WTC11 (cell line): ENCODE measurements at regions of chr10 and their contacts with region 1.

Region 1: GRCh38 chr10:103845972-103846371 is 9.4 kb downstream of the SH3PXD2A start:
- DNase-seq: no peak
- ATAC-seq: no peak; the same call in 1 of the 2 replicates
- H3K4me3 Mint-ChIP-seq: no peak overlapping the region
- H3K27ac Mint-ChIP-seq: no peak overlapping the region
- H3K4me1 Mint-ChIP-seq: peaks cover 46% of the 10 kb centered on the region
- H3K27me3 Mint-ChIP-seq: no peaks in the 10 kb centered on the region
- CTCF ChIP-seq: no peak

Region 2: DNA sequence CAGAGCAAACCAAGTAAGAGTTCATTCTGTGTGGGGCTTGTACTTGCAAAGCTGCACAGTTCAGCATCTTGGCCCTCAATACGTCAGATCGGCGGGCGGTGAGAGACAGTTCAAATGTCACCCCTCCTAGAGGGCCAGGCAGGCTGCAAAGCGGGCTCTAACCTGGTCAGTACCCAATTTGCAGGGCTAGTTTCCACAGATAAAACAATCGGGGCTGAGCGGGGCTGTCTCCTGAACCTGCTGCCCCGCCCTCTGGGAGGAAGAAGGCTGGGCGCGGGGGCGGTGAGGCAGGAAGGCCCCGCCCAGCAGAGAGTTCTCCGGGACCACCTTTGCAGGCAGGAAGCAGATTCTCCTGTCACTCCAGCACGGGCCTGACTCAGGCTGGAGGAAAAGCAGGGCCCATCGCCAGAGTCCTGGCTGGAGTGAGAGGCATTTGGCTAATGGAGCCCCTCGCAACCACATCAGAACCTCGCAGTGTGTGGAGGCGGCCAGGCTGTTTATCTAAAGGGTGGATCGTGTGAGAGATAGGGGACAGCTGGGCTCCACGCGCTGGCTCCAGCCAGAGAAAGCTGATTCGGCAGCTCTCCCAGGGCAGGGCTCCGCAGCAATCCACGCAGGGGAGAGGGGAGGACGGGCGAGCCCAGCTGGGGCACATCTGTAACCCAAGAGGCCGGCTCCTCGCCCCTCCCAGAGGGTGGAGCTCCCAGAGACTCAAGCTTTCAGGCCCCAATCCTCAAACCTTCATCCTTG is 73.7 kb before region 1 on chr10:
- CTCF ChIA-PET with region 1: interaction called, 11 read pairs
- POLR2A ChIA-PET with region 1: no interaction called
- DNase-seq: peak; percentile 87
- ATAC-seq: peak; percentile 92
- H3K4me3 Mint-ChIP-seq: peak overlapping the region; percentile 85
- H3K27ac Mint-ChIP-seq: peak overlapping the region; percentile 99
- H3K4me1 Mint-ChIP-seq: peaks cover 34% of the 10 kb centered on the region
- H3K27me3 Mint-ChIP-seq: no peaks in the 10 kb centered on the region
- CTCF ChIP-seq: no peak

Region 3: GRCh38 chr10:103781329-103782061 is 64.5 kb before region 1 on chr10:
- CTCF ChIA-PET with region 1: interaction called, 14 read pairs
- POLR2A ChIA-PET with region 1: no interaction called
- DNase-seq: no peak
- ATAC-seq: peak; percentile 75
- H3K4me3 Mint-ChIP-seq: no peak overlapping the region
- H3K27ac Mint-ChIP-seq: no peak overlapping the region
- H3K4me1 Mint-ChIP-seq: peaks cover 19% of the 10 kb centered on the region; the same call in 1 of the 2 replicates
- H3K27me3 Mint-ChIP-seq: no peaks in the 10 kb centered on the region
- CTCF ChIP-seq: no peak

Region 4: DNA sequence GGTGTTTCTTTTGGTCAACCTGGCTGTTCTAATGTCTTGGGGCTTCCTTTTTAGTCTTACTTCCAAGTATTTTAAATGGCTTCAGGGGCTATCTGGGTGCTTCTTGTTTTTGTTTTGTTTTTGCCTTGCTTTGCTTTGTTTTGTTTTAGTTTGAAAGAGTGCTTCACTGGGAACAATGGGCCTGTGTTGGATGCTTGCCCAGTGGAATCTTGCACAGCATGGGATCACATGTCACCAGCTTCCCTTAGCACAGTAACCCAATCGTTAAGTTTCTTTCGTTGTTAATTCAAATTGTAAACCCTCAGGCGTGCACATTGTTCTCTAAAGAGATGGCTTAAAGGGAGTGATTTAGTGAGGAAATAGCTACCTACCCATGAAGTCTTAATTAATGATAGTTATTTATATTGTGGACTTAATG is 230.8 kb after region 1 on chr10:
- CTCF ChIA-PET with region 1: no interaction called
- POLR2A ChIA-PET with region 1: no interaction called
- DNase-seq: no peak
- ATAC-seq: peak; percentile 79
- H3K4me3 Mint-ChIP-seq: no peak overlapping the region
- H3K27ac Mint-ChIP-seq: no peak overlapping the region
- H3K4me1 Mint-ChIP-seq: peaks cover 19% of the 10 kb centered on the region
- H3K27me3 Mint-ChIP-seq: no peaks in the 10 kb centered on the region; the same call in 1 of the 2 replicates
- CTCF ChIP-seq: no peak